Mammary epithelial cell (primary cell): ENCODE measurements at regions of chr1 and their contacts with region 1.

Region 1: DNA sequence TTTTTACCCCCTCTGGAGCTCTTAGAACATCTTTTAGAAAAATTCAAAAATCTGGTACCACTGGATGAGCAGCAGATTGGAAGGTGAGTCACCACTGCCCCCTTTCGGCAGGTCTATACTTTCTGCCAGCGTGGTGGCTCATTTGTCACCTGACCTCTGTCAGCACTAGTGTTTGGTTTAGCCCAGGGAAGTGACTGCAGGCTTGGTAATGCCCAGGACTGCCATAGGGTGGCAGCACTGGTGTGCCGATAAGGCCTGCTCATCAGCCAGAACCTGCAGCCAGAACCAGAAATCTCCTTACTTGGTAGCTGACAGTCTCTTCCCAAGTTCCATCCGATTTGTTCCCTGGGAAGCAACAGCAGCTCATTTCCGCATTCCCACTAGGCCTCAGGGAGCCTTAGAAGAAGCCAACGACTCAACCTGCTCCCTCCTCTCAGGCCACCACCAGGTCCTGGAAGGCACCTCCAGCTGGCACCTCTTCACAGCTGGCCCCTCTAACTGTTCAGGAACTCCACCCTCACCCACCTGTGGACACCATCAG is 6.8 kb downstream of the SMIM12 start:
- DNase-seq: peak; percentile 91
- H3K4me3 ChIP-seq: no peak overlapping the region
- H3K27ac ChIP-seq: no peak overlapping the region
- H3K4me1 ChIP-seq: peaks cover 19% of the 10 kb centered on the region
- H3K27me3 ChIP-seq: no peaks in the 10 kb centered on the region
- CTCF ChIP-seq: peak; percentile 96 to 99

Region 2: GRCh38 chr1:34549199-34549598 is 303.5 kb before region 1 on chr1:
- CTCF ChIA-PET with region 1: no interaction called
- dilution Hi-C with region 1: no loop called
- in situ Hi-C with region 1: no loop called
- intact Hi-C with region 1: loop called (anchors 5 kb)
- DNase-seq: peak; percentile 18
- H3K4me3 ChIP-seq: no peak overlapping the region
- H3K27ac ChIP-seq: no peak overlapping the region
- H3K4me1 ChIP-seq: no peaks in the 10 kb centered on the region
- H3K27me3 ChIP-seq: no peaks in the 10 kb centered on the region
- CTCF ChIP-seq: peak; percentile 15 to 47

Region 3: DNA sequence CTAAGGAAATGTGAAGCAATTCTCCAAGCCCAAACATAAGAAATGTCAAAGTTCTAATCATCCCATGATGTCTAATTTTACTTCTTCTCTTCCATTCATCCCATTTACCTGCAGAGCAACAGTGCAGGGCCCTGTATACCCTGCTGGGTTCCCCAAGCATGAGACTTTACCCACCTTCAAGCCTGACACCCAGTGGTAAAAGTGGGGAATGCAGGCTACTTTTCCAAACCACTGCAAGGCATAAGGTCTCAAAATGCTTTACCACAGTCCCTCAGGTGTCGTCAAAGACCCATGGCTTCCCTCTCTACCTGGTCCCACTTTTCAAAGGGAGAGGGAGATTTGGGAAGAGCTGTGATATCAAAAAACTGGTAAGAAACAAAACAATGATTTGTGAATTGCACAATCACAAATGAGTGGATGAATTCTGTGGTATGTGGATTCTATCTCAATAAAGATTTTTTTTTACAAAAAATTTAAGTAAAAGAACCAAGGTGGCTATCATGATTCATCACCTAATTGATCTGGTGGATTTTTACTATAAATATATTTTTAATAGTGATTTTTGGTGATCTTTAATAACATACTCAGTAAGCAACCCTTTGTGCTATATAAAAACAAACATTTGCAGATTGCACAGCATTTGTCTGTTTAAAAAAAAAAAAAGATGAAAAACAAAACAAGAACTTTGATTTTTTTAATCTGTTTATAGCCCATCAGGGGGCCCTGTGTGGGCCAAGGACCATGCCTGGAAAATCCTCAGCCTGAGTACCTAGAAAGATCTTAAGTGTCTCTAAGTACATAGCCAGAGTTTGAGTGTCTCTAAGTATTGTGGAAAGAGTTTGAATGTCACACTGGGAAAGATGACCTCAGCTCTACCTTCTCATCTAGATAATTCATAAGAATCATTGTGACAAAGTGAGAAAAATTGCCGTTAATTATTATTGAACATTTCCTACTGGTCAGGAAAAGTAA is 171.0 kb before region 1 on chr1:
- CTCF ChIA-PET with region 1: no interaction called
- dilution Hi-C with region 1: no loop called
- in situ Hi-C with region 1: no loop called
- intact Hi-C with region 1: loop called (anchors 1 kb)
- DNase-seq: peak; percentile 39
- H3K4me3 ChIP-seq: no peak overlapping the region
- H3K27ac ChIP-seq: no peak overlapping the region
- H3K4me1 ChIP-seq: no peaks in the 10 kb centered on the region
- H3K27me3 ChIP-seq: no peaks in the 10 kb centered on the region
- CTCF ChIP-seq: peak; percentile 91 to 94

Region 4: DNA sequence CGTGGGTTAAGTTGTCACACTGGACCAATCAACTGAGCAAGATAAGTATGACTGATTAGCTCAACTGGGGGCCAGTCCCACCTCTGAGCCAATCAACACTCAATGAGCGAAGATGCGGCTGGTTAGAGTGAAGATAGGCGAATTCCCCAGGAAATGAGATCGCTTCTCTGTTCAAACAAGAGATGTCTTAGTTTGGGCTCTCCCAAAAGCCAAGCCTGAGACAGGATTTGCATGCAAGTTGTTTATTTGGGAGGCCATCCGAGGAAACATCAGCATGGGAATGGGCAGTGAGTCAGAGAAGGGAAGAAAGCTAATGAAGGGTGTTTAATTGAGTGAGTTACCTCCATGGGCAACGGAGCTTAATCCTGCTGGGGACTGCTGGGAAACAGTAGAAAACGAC is 102.8 kb before region 1 on chr1:
- CTCF ChIA-PET with region 1: no interaction called
- dilution Hi-C with region 1: no loop called
- in situ Hi-C with region 1: no loop called
- intact Hi-C with region 1: no loop called
- DNase-seq: no peak
- H3K4me3 ChIP-seq: no peak overlapping the region
- H3K27ac ChIP-seq: no peak overlapping the region
- H3K4me1 ChIP-seq: peaks cover 24% of the 10 kb centered on the region
- H3K27me3 ChIP-seq: no peaks in the 10 kb centered on the region
- CTCF ChIP-seq: no peak

Region 5: GRCh38 chr1:34786521-34787325 is 66.0 kb before region 1 on chr1:
- CTCF ChIA-PET with region 1: no interaction called
- dilution Hi-C with region 1: no loop called
- in situ Hi-C with region 1: no loop called
- intact Hi-C with region 1: loop called (anchors 1 kb)
- DNase-seq: peak; percentile 48
- H3K4me3 ChIP-seq: no peak overlapping the region
- H3K27ac ChIP-seq: peak overlapping the region; percentile 18
- H3K4me1 ChIP-seq: peaks cover 37% of the 10 kb centered on the region
- H3K27me3 ChIP-seq: no peaks in the 10 kb centered on the region
- CTCF ChIP-seq: peak; percentile 84

Region 6: GRCh38 chr1:34896613-34897012 is 43.9 kb after region 1 on chr1:
- CTCF ChIA-PET with region 1: no interaction called
- dilution Hi-C with region 1: no loop called
- in situ Hi-C with region 1: no loop called
- intact Hi-C with region 1: no loop called
- DNase-seq: no peak
- H3K4me3 ChIP-seq: no peak overlapping the region
- H3K27ac ChIP-seq: no peak overlapping the region
- H3K4me1 ChIP-seq: no peaks in the 10 kb centered on the region
- H3K27me3 ChIP-seq: no peaks in the 10 kb centered on the region
- CTCF ChIP-seq: no peak

Region 7: DNA sequence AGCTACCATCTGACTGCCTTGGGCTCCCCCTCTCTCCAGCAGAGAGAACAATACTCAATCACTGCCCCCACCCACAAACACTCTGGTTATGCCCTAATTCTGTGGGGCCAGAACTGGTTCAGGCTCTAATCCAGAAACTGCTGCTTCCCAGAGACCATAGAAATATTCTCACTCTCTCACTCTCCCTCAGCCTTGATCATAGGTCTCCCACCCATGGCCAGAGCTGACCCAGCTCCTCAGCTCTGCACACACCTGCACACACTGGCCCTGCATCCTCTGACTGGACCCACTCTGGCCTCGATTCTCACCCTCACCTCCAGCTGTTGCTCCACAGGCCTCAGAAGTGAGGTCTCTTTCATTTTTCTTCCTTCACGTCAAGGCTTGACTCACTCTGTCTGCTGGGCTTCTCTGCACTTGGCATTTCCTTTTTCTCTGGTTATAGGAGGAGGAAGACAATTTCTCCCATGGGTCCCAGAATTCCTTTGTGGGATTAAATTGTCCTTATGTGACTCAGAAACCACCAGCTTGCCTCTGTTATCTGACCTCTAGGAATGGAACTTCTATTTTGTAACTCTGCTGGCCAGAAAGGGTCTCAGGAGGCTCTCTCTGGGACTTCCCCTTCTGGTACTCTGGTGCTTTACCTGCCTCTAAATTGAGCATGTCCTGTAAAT is 194.6 kb after region 1 on chr1:
- CTCF ChIA-PET with region 1: no interaction called
- dilution Hi-C with region 1: no loop called
- in situ Hi-C with region 1: no loop called
- intact Hi-C with region 1: no loop called
- DNase-seq: peak; percentile 74
- H3K4me3 ChIP-seq: peak overlapping the region in 1 of 3 experiments; percentile 6
- H3K27ac ChIP-seq: peak overlapping the region; percentile 4
- H3K4me1 ChIP-seq: peaks cover 14% of the 10 kb centered on the region
- H3K27me3 ChIP-seq: no peaks in the 10 kb centered on the region
- CTCF ChIP-seq: no peak

Region 8: GRCh38 chr1:35557292-35558063 is 704.7 kb after region 1 on chr1 and contains the starts of genes KIAA0319L and NCDN:
- CTCF ChIA-PET with region 1: no interaction called
- dilution Hi-C with region 1: no loop called
- in situ Hi-C with region 1: loop called in 1 of 2 experiments (anchors 25 kb)
- intact Hi-C with region 1: no loop called
- DNase-seq: peak; percentile 97
- H3K4me3 ChIP-seq: peak within 1 kb of the TSS; percentile 85 to 96 (median 90)
- H3K27ac ChIP-seq: peak within 1 kb of the TSS; percentile 69
- H3K4me1 ChIP-seq: peaks cover 55% of the 10 kb centered on the region
- H3K27me3 ChIP-seq: no peaks in the 10 kb centered on the region
- CTCF ChIP-seq: no peak
- total RNA-seq, gene KIAA0319L: 38.1 to 68.2 TPM
- total RNA-seq, gene NCDN: 21.8 to 35.1 TPM